ENCODE measurements at regions of chr21 and their contacts with region 1.

Region 1: DNA sequence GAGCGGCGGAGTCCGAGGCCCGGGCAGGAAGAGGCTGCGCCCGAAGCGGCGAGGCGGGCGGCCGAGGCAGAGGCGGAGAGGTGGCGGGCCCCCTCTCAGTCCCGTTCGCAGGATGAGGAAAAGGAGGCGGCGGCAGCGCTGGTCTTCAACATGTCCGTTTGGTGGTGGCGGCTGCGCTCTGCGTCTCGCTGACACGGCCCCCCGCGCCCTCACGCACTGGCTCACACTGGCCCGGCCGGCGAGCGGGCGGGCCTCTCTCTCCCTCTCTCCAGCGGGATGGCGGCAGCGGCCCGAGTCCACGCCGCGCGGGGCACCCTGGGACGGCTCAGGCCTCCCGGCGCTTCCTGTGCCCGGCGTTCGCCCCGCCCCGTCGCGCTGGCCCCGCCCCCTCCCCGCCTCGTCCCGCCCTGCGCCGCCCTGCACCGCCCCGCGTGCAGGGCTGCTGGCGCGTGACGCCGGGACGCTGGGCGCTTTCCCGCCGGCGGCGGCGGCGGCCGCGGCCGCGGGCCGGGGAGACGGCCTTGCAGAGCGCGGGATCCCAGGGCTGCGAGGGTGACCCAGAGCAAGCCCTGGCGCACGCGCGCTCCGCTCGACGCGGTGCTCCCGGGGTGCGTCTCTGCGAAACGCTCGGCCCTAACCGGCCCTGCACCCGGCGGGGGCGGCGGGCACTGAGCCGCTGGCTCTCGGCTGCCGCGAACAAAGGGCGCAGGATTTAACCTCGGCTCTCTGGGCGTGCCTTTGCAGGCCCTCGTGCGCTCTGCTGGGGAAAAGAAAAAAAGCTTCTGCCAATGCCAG is at the start of gene SCAF4:
- DNase-seq: peak; percentile 89 to 94
- H3K4me3 ChIP-seq: peak within 1 kb of the TSS; percentile 83 to 94
- H3K27ac ChIP-seq: peak within 1 kb of the TSS; percentile 97
- H3K4me1 ChIP-seq: peaks cover 0 to 42% (median 32%) of the 10 kb centered on the region in 4 donors
- H3K27me3 ChIP-seq: no peaks in the 10 kb centered on the region
- CTCF ChIP-seq: no peak

Region 2: GRCh38 chr21:31604591-31605190 is 127.3 kb before region 1 on chr21:
- intact Hi-C with region 1: no loop called
- DNase-seq: peak in 1 of 2 donors; percentile 42
- H3K4me3 ChIP-seq: no peak overlapping the region
- H3K27ac ChIP-seq: no peak overlapping the region
- H3K4me1 ChIP-seq: no peaks in the 10 kb centered on the region
- H3K27me3 ChIP-seq: peaks cover 0 to 2% of the 10 kb centered on the region in 2 donors
- CTCF ChIP-seq: peak; percentile 66 to 80

Region 3: DNA sequence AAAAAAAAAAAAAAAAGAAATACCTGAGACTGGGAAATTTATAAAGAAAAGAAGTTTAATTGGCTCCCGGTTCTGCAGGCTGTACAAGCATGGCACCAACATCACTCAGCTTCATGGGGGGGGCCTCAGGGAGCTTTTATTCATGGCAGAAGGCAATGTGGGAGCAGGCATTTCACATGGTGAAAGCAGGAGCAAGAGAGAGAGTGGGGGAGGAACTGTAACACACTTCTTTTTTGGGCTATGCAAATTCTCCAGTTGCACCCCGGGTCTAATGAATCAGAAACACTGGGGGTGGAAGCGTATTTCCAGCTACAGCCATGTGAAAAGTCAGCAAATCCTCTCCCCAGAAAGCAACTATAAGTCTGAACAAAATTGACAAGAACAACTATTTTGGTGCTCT is 84.3 kb before region 1 on chr21:
- intact Hi-C with region 1: no loop called
- DNase-seq: no peak
- H3K4me3 ChIP-seq: no peak overlapping the region
- H3K27ac ChIP-seq: no peak overlapping the region
- H3K4me1 ChIP-seq: no peaks in the 10 kb centered on the region
- H3K27me3 ChIP-seq: no peaks in the 10 kb centered on the region
- CTCF ChIP-seq: no peak

Region 4: DNA sequence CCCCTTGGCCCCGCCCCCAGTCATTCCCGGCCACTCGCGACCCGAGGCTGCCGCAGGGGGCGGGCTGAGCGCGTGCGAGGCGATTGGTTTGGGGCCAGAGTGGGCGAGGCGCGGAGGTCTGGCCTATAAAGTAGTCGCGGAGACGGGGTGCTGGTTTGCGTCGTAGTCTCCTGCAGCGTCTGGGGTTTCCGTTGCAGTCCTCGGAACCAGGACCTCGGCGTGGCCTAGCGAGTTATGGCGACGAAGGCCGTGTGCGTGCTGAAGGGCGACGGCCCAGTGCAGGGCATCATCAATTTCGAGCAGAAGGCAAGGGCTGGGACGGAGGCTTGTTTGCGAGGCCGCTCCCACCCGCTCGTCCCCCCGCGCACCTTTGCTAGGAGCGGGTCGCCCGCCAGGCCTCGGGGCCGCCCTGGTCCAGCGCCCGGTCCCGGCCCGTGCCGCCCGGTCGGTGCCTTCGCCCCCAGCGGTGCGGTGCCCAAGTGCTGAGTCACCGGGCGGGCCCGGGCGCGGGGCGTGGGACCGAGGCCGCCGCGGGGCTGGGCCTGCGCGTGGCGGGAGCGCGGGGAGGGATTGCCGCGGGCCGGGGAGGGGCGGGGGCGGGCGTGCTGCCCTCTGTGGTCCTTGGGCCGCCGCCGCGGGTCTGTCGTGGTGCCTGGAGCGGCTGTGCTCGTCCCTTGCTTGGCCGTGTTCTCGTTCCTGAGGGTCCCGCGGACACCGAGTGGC is 72.3 kb before region 1 on chr21 and contains the start of gene SOD1:
- intact Hi-C with region 1: loop called (anchors 2 kb)
- DNase-seq: peak; percentile 94 to 97
- H3K4me3 ChIP-seq: peak within 1 kb of the TSS; percentile 96 to 99
- H3K27ac ChIP-seq: peak within 1 kb of the TSS; percentile 93 to 96
- H3K4me1 ChIP-seq: peaks cover 0 to 46% (median 27%) of the 10 kb centered on the region in 4 donors
- H3K27me3 ChIP-seq: no peaks in the 10 kb centered on the region
- CTCF ChIP-seq: peak in 1 of 2 experiments; percentile 20

Region 5: GRCh38 chr21:31830701-31831100 is 98.7 kb after region 1 on chr21:
- intact Hi-C with region 1: no loop called
- DNase-seq: no peak
- H3K4me3 ChIP-seq: no peak overlapping the region
- H3K27ac ChIP-seq: no peak overlapping the region
- H3K4me1 ChIP-seq: no peaks in the 10 kb centered on the region
- H3K27me3 ChIP-seq: no peaks in the 10 kb centered on the region
- CTCF ChIP-seq: no peak

Region 6: GRCh38 chr21:32278518-32279376 is 546.7 kb after region 1 on chr21 and contains the start of gene MIS18A:
- intact Hi-C with region 1: loop called (anchors 10 kb)
- DNase-seq: peak; percentile 93 to 97
- H3K4me3 ChIP-seq: peak within 1 kb of the TSS; percentile 68 to 97
- H3K27ac ChIP-seq: peak within 1 kb of the TSS; percentile 64 to 73
- H3K4me1 ChIP-seq: peaks cover 0 to 22% (median 14%) of the 10 kb centered on the region in 4 donors
- H3K27me3 ChIP-seq: no peaks in the 10 kb centered on the region
- CTCF ChIP-seq: no peak

Region 7: DNA sequence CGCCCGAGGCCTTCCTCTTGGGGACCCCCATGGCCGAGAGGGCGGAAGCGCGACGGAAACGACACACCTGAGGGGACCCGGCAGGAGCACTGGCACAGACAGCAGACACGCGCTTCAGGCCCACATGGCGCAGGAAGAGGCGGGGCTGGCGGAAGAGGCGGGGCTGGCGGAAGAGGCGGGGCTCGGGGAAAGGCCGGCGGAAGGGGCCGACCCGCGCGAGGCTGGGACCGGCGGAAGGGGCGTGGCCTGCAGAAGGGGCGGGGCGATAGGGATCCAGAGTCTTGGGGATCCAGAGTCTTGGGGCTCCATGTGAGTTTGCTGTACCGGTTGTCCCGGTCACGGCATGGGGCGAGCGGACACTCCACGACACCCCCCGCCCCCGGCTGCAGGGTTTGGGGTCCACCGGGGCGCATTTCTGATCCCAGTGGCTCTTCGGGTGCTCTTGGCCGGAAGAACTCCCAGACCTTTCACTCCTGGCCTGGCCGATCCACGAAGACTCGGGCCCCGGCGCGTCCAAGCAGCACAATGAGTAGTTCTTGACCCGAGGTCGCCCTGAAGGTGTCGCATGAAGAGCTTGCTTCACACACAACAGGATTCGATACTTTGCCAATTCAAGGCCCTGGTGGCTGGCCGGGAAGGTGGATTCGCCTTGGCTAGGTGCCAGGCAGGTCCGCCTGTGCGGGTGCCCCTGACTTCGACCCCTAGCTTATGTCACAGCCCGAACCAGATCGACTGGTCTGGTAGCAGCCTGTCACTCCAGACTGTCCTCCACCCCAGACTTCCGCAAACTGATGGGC is 661.1 kb after region 1 on chr21 and contains the start of gene URB1:
- intact Hi-C with region 1: loop called (anchors 2 kb)
- DNase-seq: peak; percentile 86 to 94
- H3K4me3 ChIP-seq: peak within 1 kb of the TSS; percentile 87 to 97
- H3K27ac ChIP-seq: peak within 1 kb of the TSS; percentile 72 to 84
- H3K4me1 ChIP-seq: peaks cover 0 to 28% (median 20%) of the 10 kb centered on the region in 4 donors
- H3K27me3 ChIP-seq: no peaks in the 10 kb centered on the region
- CTCF ChIP-seq: no peak

Region 8: DNA sequence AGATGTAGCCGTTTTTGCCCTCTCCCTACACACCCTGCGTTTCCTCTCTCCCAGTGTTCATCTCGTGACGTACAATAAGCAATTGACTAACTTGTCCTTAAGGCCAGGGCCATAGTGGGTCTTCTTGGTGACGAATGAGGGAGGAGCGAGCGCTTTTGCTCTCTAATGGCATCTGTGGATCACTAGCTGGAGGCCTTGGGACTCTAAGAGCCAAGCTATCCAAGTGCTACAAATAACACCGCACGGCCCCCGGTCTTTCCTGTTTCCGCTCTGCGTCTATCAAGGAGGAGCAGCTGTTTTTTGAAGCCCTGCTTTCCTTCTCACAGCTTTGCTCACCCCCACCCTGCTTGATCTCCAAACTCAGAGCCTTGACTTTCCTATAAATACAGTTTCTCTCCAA is 705.7 kb after region 1 on chr21:
- intact Hi-C with region 1: no loop called
- DNase-seq: no peak
- H3K4me3 ChIP-seq: no peak overlapping the region
- H3K27ac ChIP-seq: no peak overlapping the region
- H3K4me1 ChIP-seq: peaks cover 0 to 8% (median 3%) of the 10 kb centered on the region in 4 donors
- H3K27me3 ChIP-seq: no peaks in the 10 kb centered on the region
- CTCF ChIP-seq: no peak

Measured in tibial artery (tissue), 4 donors.